ENCODE measurements at regions of chr1 and their contacts with region 1.

Region 1: DNA sequence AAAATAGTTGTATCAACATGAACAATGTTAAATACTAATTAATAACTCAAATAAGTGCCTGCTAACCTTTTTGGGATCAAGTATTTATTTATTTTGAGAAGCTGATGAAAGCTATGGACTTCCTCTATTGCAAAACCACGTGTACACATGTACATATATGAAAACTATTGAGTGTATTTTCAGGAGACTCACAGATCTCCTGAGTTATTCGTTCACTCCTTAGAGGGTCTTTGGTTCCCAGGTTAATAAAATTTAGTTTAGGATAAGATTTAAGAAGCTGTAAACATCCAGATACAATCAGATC is 130.5 kb downstream of the DISC1 start:
- DNase-seq: no peak
- H3K4me3 ChIP-seq: no peak overlapping the region
- H3K27ac ChIP-seq: no peak overlapping the region
- H3K4me1 ChIP-seq: no peaks in the 10 kb centered on the region
- H3K27me3 ChIP-seq: no peaks in the 10 kb centered on the region; a peak in 1 of 7 replicates
- CTCF ChIP-seq: no peak
- EP300 ChIP-seq: no peak
- POLR2A ChIP-seq: no peak
- RAD21 ChIP-seq: no peak

Region 2: DNA sequence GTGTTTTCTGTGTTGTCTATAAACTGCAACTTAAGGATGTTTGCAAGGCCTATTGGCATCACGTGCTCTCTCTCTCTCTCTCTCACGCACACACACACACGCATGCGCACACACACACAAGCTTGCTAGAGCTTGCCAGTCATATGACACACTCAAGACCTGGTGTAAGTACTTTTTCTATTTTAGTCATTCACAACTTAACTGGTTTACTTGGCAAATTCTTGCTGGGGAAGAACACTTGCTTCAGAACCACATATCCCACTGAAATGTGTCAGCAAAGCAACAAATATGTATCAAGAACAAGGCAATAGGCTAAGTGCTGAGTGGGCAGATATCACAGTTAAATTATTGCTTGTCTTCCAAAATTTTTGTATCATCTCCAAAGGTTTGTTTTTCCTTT is 22.6 kb before region 1 on chr1:
- CTCF ChIA-PET with region 1: interaction called, 25 read pairs
- POLR2A ChIA-PET with region 1: no interaction called
- DNase-seq: no peak
- H3K4me3 ChIP-seq: no peak overlapping the region
- H3K27ac ChIP-seq: no peak overlapping the region
- H3K4me1 ChIP-seq: no peaks in the 10 kb centered on the region
- H3K27me3 ChIP-seq: no peaks in the 10 kb centered on the region
- CTCF ChIP-seq: no peak
- EP300 ChIP-seq: no peak
- POLR2A ChIP-seq: no peak
- RAD21 ChIP-seq: no peak

Region 3: GRCh38 chr1:231776010-231776756 is 19.1 kb after region 1 on chr1:
- CTCF ChIA-PET with region 1: interaction called, 21 read pairs
- POLR2A ChIA-PET with region 1: no interaction called
- DNase-seq: no peak
- H3K4me3 ChIP-seq: no peak overlapping the region
- H3K27ac ChIP-seq: no peak overlapping the region
- H3K4me1 ChIP-seq: no peaks in the 10 kb centered on the region
- H3K27me3 ChIP-seq: no peaks in the 10 kb centered on the region; a peak in 1 of 7 replicates
- CTCF ChIP-seq: no peak
- EP300 ChIP-seq: no peak
- POLR2A ChIP-seq: no peak
- RAD21 ChIP-seq: no peak

Region 4: DNA sequence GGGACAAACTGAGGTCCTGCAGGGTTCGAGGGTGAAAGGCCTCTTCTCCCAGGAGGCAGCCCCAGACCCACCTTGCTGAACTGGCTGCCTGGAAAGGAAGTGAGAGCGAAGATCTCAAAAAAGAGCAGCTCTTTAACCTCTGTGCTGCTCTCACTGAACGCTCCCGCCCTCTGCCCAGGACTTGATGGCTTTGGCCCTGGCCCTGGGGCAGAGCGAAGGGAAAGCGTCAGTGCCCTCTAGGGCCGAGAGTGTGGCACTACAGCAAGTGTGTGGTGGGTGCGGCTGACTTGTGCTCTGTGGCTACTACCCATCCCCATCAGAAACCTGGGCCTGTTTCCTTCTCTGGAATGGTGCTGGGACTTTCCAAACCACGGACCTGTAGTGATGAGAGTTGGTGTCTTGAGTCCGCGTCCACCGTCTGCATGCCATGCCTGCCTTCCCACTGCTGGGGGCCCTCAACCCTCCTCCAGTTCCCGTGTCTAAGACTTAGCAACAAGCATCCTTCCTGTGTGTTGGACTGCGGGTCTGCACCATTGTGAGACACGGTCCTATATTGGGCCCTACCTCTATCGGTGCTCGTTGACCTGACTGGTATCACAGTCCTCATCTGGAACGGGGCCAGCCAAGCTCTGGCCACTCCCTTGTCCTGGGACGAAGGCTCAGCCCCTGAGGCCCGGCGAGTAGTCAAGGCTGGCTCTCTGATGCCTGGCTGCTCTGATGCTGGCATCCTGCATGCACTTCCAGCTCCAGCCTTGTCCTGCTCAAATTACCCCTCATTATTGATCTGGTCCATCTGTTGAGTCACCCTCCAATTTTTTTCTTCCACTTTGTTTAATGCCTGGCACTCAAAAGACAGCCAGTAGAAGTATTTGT is 49.8 kb after region 1 on chr1:
- CTCF ChIA-PET with region 1: interaction called, 47 read pairs
- POLR2A ChIA-PET with region 1: no interaction called
- DNase-seq: peak; percentile 53 to 79
- H3K4me3 ChIP-seq: no peak overlapping the region
- H3K27ac ChIP-seq: no peak overlapping the region
- H3K4me1 ChIP-seq: peaks cover 0 to 2% (median 0%) of the 10 kb centered on the region in 4 experiments; a peak in 1 of 7 replicates
- H3K27me3 ChIP-seq: no peaks in the 10 kb centered on the region
- CTCF ChIP-seq: peak; percentile 88 to 99 (median 98)
- EP300 ChIP-seq: no peak
- POLR2A ChIP-seq: no peak
- RAD21 ChIP-seq: peak; percentile 89 to 92

Region 5: GRCh38 chr1:231883382-231883781 is 126.3 kb after region 1 on chr1:
- CTCF ChIA-PET with region 1: no interaction called
- POLR2A ChIA-PET with region 1: no interaction called
- DNase-seq: peak in 1 of 2 experiments; percentile 3
- H3K4me3 ChIP-seq: no peak overlapping the region
- H3K27ac ChIP-seq: no peak overlapping the region
- H3K4me1 ChIP-seq: no peaks in the 10 kb centered on the region; a peak in 1 of 7 replicates
- H3K27me3 ChIP-seq: no peaks in the 10 kb centered on the region; a peak in 1 of 7 replicates
- CTCF ChIP-seq: peak; percentile 50 to 72 (median 55)
- EP300 ChIP-seq: no peak
- POLR2A ChIP-seq: no peak
- RAD21 ChIP-seq: peak; percentile 71 to 84

Region 6: DNA sequence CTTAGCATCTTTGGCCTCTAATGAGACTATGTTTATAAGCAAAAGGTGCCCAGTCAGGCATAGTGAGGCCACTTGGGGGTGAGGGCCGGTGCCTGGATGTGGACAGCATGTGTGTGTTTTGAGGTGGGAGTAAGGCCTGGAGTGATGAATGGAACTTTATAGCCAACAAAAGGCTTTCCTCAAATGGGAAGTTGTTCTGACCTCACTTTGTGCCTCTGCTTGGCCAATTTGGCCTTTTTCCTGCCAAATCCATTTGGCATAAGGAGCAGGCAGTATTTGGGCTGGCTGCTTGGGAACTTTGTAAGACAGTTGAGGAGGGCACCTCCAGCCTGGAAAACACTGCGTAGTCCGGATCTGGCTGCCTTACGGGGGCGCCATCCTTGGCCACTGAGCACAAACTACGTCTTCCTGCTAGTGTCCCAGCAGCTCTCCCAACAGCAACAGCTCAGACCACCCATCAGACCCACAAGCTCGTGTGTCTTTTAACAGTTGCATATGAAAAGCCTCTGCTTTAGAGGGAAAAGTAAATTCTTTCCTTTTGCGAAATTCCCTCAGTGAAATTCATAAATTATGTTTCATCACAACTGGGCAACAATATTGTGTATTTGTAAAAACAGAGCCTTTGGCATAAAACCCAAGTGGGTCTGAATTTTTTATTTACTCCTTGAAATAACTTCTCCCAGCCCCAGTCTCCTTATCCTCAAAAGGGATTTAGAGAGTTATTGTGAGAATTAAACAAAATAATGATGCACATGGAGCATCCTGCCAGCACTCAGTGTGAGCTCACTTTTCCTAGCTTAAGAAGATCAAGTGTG is 192.4 kb after region 1 on chr1:
- CTCF ChIA-PET with region 1: no interaction called
- POLR2A ChIA-PET with region 1: no interaction called
- DNase-seq: peak; percentile 27 to 56
- H3K4me3 ChIP-seq: no peak overlapping the region
- H3K27ac ChIP-seq: no peak overlapping the region
- H3K4me1 ChIP-seq: peaks cover 0 to 4% (median 1%) of the 10 kb centered on the region in 4 experiments; a peak in 1 of 7 replicates
- H3K27me3 ChIP-seq: no peaks in the 10 kb centered on the region
- CTCF ChIP-seq: peak; percentile 25 to 63 (median 49); a peak in 3 of 4 replicates
- EP300 ChIP-seq: no peak
- POLR2A ChIP-seq: no peak
- RAD21 ChIP-seq: peak; percentile 29 to 43; a peak in 3 of 4 replicates

Measured in H1 (cell line).